ENCODE measurements at regions of chr13 and their contacts with region 1.

Region 1: DNA sequence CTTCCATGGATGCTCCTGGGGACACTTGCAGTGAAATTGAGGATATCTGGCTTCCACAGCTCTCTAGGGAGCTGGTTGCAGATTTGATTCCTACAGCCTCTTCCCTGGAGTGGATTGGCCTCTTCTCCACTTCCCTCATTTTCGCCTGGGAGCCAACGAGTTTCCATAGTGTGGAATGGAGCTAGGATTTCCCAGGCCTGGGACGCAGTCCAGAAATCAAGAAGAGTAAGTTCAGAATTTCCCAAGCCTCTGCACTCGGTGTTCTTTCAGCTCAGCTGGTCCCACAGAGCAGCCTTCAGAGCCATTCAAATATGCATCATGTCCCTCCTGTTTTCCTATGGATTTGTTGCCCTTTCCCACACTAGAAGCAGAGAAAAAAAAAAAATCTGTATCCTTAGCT is 68.2 kb downstream of the RAP2A start:
- DNase-seq: no peak
- ATAC-seq: no peak
- H3K4me3 ChIP-seq: no peak overlapping the region
- H3K27ac ChIP-seq: no peak overlapping the region
- H3K4me1 ChIP-seq: peaks cover 23% of the 10 kb centered on the region; the same call in 1 of the 2 replicates
- H3K27me3 ChIP-seq: no peaks in the 10 kb centered on the region
- CTCF ChIP-seq: no peak

Region 2: DNA sequence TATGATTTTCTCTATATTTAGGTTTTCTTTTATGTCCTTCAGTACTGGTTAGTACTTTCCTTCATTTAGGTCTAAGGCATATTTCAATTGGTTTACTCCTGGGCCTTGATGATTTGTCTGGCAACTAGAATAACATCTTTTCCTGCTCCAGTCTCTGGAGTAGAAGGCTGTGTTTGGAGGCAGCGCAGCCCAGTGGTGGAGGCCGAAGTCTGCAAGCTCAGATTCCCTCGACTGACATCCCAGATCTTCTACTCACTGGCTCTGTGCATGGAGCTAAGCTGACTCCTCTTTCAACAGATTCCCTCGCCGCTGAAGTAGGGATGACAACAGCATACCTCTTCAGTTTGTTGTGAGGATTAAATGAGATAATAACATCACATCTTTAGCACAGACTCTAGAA is 72.7 kb after region 1 on chr13:
- CTCF ChIA-PET with region 1: no interaction called
- POLR2A ChIA-PET with region 1: no interaction called
- intact Hi-C with region 1: loop called (anchors 5 kb)
- DNase-seq: peak; percentile 59
- ATAC-seq: peak; percentile 91
- H3K4me3 ChIP-seq: no peak overlapping the region
- H3K27ac ChIP-seq: no peak overlapping the region
- H3K4me1 ChIP-seq: no peaks in the 10 kb centered on the region
- H3K27me3 ChIP-seq: no peaks in the 10 kb centered on the region
- CTCF ChIP-seq: peak; percentile 72